ENCODE measurements at regions of chr2 and their contacts with region 1.

Region 1: DNA sequence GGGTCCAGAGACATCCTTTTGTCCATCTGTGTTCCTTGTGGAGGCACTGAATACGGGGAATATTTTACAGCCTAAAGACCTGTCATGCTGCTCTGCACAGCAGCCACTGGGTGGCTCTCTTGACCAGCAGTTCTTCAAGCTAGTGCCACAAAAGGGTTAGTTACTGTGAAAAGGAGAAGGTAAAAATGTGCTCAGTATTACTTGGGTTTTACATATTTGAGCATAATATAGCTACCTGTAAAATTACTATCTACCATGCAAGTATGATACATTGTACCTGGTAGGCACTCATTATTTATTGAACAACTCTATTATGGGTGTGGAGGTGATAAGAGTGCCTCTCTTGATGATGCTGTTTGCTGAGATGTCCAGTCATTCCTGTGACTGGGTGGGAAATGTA is 23.6 kb downstream of the FZD5 start:
- DNase-seq: no peak

Region 2: GRCh38 chr2:208017721-208018120 is 271.6 kb after region 1 on chr2:
- intact Hi-C with region 1: no loop called
- DNase-seq: no peak

Region 3: DNA sequence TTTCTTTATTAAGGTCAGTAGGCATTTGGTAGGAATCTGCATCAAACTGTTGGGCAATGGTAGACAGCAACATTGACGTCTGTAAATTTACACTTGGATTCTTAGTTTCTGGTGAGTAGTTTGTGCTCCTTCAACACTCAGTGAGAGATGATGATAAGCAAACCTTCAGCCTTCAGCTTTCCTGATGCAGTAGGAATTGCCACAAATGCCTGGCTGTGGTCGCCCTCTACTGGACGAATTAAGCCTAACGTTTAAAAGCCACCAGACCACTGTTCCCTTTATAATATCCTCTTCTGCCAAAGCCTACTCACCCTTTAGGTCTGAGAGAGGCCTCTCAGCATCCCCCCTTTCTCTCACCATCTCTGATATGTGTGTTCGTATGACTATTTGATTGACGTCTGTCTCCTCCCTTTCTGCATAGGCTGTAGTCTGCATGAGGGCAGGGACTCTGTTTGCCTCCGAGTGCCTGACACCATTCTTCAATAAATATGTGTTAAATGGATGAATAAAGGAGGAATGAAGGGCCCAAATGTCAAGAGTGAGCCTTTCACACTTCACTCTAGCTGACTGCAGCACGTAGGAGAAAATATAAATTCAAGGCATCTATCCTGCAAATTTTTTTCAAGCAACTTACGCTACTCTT is 326.2 kb after region 1 on chr2:
- intact Hi-C with region 1: loop called in 1 of 2 experiments (anchors 10 kb)
- DNase-seq: no peak